ENCODE measurements at regions of chr1 and their contacts with region 1.

Region 1: GRCh38 chr1:205255941-205256780 is 28.4 kb downstream of the TMCC2 start:
- DNase-seq: peak; percentile 88 to 92 (median 91)
- ATAC-seq: peak; percentile 91 to 93 (median 92)
- H3K4me3 ChIP-seq: no peak overlapping the region
- H3K27ac ChIP-seq: peak overlapping the region in 6 of 12 donors; percentile 6 to 43 (median 35)
- H3K4me1 ChIP-seq: peaks cover 2 to 54% (median 35%) of the 10 kb centered on the region in 12 donors
- H3K27me3 ChIP-seq: no peaks in the 10 kb centered on the region
- CTCF ChIP-seq: peak; percentile 92 to 99 (median 96)
- POLR2A ChIP-seq: no peak

Region 2: GRCh38 chr1:204806943-204807687 is 449.0 kb before region 1 on chr1:
- intact Hi-C with region 1: loop called in 1 of 10 experiments (anchors 5 kb)
- DNase-seq: peak; percentile 80 to 86 (median 82)
- ATAC-seq: peak; percentile 85 to 96 (median 94)
- H3K4me3 ChIP-seq: peak overlapping the region in 11 of 12 donors; percentile 37 to 63 (median 51)
- H3K27ac ChIP-seq: no peak overlapping the region
- H3K4me1 ChIP-seq: peaks cover 0 to 11% (median 0%) of the 10 kb centered on the region in 12 donors
- H3K27me3 ChIP-seq: no peaks in the 10 kb centered on the region
- CTCF ChIP-seq: peak; percentile 92 to 98 (median 96)
- POLR2A ChIP-seq: no peak

Region 3: GRCh38 chr1:204989266-204990058 is 266.7 kb before region 1 on chr1:
- intact Hi-C with region 1: loop called in 6 of 10 experiments (anchors 1 to 5 kb)
- DNase-seq: peak; percentile 63 to 81 (median 68)
- ATAC-seq: peak; percentile 68 to 91 (median 86)
- H3K4me3 ChIP-seq: no peak overlapping the region
- H3K27ac ChIP-seq: no peak overlapping the region
- H3K4me1 ChIP-seq: peaks cover 0 to 10% (median 0%) of the 10 kb centered on the region in 12 donors
- H3K27me3 ChIP-seq: no peaks in the 10 kb centered on the region
- CTCF ChIP-seq: peak; percentile 83 to 92 (median 92)
- POLR2A ChIP-seq: no peak

Region 4: GRCh38 chr1:205121660-205122488 is 134.3 kb before region 1 on chr1 and contains the start of gene RBBP5:
- intact Hi-C with region 1: loop called in 5 of 10 experiments (anchors 1 to 5 kb)
- DNase-seq: peak; percentile 95 to 97 (median 96)
- ATAC-seq: peak; percentile 99
- H3K4me3 ChIP-seq: peak within 1 kb of the TSS; percentile 68 to 96 (median 81)
- H3K27ac ChIP-seq: peak within 1 kb of the TSS; percentile 89 to 98 (median 94)
- H3K4me1 ChIP-seq: peaks cover 7 to 31% (median 26%) of the 10 kb centered on the region in 12 donors
- H3K27me3 ChIP-seq: no peaks in the 10 kb centered on the region
- CTCF ChIP-seq: peak; percentile 41 to 90 (median 61)
- POLR2A ChIP-seq: peak in 1 of 2 donors; percentile 48
- total RNA-seq, gene RBBP5: 8.4 to 12.1 (median 10.1) TPM

Region 5: GRCh38 chr1:205227584-205228006 is 28.6 kb before region 1 on chr1 and contains the start of gene TMCC2:
- intact Hi-C with region 1: loop called in 2 of 10 experiments (anchors 2 kb)
- DNase-seq: peak; percentile 88 to 95 (median 93)
- ATAC-seq: peak; percentile 92 to 97 (median 96)
- H3K4me3 ChIP-seq: peak within 1 kb of the TSS; percentile 35 to 71 (median 62)
- H3K27ac ChIP-seq: peak within 1 kb of the TSS in 4 of 12 donors; percentile 3 to 46 (median 18)
- H3K4me1 ChIP-seq: peaks cover 0 to 28% (median 19%) of the 10 kb centered on the region in 12 donors
- H3K27me3 ChIP-seq: peaks cover 0 to 10% (median 0%) of the 10 kb centered on the region in 9 donors
- CTCF ChIP-seq: no peak
- POLR2A ChIP-seq: peak in 1 of 2 donors; percentile 64
- total RNA-seq, gene TMCC2: 0.97 to 5.1 (median 2.1) TPM